CD4-positive, alpha-beta T cell (primary cell): ENCODE measurements at regions of chr7 and their contacts with region 1.

Region 1: DNA sequence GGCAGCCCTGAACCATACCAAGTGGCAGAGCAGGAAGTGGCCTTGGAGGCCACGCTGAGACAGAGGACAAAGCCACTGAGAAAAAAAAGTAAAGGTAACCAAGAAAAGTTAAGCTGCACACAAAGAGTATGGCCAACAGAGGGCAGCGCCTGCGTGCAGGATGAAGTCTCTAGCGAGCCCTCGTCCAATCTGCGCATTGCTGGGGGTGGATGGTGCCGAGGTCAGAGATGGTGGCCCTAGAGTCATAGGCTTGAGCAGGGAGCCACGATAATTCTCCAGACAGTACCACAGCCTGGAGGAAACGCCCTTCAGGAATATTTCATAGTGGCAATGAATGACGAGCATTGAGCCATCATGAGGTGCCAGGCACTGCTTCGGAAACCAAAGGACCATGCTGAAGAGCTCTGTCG is 9.7 kb downstream of the ATP6V0E2 start:
- DNase-seq: peak in 11 of 14 experiments; percentile 31 to 75 (median 54)
- ATAC-seq: peak; percentile 80
- H3K4me3 ChIP-seq: no peak overlapping the region
- H3K4me3 Mint-ChIP-seq: no peak overlapping the region
- H3K27ac ChIP-seq: no peak overlapping the region
- H3K27ac Mint-ChIP-seq: no peak overlapping the region
- H3K4me1 ChIP-seq: peaks cover 10% of the 10 kb centered on the region
- H3K4me1 Mint-ChIP-seq: peaks cover 11% of the 10 kb centered on the region
- H3K27me3 ChIP-seq: no peaks in the 10 kb centered on the region
- H3K27me3 Mint-ChIP-seq: no peaks in the 10 kb centered on the region
- CTCF ChIP-seq: peak; percentile 76

Region 2: DNA sequence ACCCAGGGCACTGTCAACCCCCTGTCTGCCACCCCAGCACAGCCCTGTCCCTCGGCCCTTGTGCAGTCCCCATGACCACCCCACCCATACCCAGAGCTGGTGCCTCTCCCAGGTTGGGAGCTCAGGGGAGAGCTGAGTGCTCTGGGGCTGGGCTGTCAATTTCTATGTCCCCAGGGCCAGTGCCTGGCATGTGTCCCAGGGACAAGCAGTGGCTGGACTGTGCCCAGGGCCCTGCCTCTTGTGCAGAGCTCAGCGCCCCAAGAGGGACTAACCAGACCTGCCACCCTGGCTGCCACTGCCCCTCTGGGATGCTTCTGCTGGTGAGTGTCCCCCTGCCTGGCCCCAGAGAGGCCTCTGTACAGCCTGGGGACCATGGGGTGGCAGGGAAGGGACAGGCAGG is 74.2 kb before region 1 on chr7:
- CTCF ChIA-PET with region 1: interaction called, 3 read pairs
- POLR2A ChIA-PET with region 1: no interaction called
- intact Hi-C with region 1: loop called in 1 of 2 experiments (anchors 2 kb)
- DNase-seq: no peak
- ATAC-seq: no peak
- H3K4me3 ChIP-seq: no peak overlapping the region
- H3K4me3 Mint-ChIP-seq: no peak overlapping the region
- H3K27ac ChIP-seq: no peak overlapping the region
- H3K27ac Mint-ChIP-seq: no peak overlapping the region
- H3K4me1 ChIP-seq: no peaks in the 10 kb centered on the region
- H3K4me1 Mint-ChIP-seq: no peaks in the 10 kb centered on the region
- H3K27me3 ChIP-seq: no peaks in the 10 kb centered on the region
- H3K27me3 Mint-ChIP-seq: no peaks in the 10 kb centered on the region
- CTCF ChIP-seq: no peak